ENCODE measurements at regions of chr1 and their contacts with region 1.

Region 1: DNA sequence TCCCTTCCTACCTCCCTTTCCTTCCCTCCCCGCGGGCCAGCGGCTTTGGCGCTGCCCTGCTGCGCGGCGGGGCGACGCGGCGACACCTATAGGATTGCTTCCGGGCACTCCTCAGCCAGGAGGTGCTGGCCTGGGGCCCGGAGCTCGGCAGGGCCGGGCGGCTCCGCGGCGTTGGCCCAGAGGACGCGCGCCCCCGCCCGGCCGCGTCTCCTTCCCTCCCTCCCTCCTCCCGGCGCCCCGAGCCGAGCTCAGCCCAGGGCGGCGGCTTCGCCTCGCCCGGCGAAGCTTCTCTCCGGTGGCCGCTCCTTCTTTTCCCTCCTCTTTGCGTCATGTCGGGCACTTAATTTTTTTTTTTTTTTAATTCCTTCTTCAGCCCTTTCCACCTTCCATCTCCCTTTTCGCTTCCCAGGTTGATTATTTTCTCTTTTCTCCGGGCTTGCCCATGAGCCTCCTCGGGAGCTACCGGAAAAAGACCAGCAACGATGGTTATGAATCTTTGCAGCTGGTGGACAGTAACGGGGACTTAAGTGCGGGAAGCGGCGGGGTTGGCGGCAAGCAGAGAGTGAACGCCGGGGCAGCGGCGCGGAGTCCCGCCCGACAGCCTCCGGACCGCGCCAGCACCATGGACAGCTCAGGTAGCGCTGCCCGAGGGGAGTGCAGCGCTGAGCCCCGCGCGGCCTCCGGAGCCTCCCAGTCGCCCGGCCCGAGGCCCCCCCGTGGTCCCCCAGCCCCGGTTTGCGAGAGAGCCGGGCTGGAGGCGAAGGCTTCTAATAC is at the start of gene DNAJC6:
- DNase-seq: peak; percentile 16 to 90 (median 72)

Region 2: DNA sequence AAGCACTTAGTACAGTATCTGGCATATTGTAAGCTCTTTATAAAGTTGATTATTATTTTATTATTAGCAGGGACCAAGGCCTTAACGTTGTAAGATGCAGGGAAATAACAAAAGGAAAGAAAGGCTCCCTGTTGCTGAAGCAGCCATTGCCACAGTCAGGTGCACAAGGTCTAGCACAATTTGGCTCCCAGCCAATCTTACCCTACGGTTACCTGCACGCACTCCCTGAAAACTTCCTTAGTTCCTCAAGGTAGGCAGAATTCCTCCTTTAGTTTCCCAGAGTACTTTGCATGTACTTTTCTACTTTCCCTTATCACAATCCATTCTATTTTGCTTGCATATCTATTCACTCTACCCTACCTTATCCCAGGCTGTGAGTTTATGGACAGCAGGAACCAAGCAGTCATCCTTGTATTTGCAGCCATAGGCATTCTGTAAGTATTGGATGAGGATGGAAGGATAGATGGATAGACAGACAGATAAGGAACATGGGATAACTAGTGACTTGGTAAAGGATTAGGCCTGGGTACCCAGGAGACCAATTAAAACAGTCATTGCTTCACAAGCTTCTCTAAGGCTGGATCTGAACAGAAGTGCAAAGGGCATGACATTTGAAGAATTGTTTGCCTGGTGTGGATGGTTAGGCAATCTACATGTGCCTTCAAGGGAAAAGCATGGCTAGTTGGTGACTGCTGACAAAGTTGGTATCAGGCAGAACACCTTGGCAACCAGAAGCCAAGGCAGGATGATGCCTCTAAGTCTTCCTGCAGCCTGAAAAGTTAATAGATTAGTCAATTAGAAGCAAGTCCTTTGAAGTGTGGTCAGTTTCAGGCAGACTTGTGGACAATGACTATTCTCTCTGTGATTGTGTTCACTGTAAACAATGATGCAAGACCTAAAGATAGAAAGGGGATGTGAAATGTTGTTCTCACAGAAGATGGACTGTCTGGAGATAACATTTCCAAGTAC is 322.3 kb before region 1 on chr1:
- intact Hi-C with region 1: no loop called
- DNase-seq: no peak

Region 3: GRCh38 chr1:65254319-65255034 is 55.0 kb before region 1 on chr1:
- intact Hi-C with region 1: loop called (anchors 10 kb)
- DNase-seq: peak; percentile 68 to 96 (median 91)

Region 4: DNA sequence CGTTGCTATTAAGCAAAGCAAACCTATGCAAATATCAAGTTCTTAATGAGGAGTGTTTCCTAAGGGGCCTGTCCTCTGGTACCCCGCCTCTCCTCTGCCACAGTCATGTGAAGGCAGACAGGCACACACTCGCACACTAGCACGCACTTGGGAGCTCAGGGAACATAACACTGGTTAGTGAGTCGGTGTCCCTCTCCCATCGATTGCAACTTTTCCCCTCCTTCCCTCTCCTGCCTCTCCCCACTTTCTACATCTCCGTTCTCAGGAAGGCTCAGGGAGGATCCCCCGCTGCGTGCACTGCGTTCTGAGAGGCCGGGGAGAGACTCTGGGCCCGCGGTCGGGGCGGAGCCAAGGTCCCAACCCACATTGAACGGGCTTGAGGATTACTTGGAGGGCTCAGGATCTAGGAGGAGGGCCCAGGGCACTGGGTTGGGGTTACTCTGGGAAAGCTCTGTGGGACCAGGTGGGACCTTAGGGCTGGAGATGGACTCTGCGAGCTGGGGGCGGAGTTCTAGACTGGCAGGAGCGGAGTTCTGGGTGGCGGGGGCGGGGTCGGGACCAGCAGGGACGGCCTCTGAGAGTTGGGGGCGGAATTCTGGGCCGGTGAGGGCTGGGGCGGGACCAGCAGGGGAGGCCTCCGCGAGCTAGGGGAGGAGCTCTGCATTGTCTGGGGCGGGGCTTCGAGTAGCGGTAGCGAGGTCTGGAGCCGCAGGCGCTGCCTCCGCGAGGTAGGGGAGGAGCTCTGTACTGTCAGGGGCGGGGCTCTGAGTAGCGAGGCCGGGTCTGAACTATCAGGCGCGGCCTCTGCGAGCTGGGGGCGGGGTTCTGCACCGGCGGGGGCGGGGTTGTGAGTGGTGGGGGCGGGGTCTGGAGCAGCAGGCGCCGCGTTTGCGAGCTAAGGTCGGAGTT is 110.4 kb after region 1 on chr1:
- intact Hi-C with region 1: loop called (anchors 10 kb)
- DNase-seq: peak; percentile 90 to 99 (median 97)

Measured in head of caudate nucleus (tissue), 42 donors.